ENCODE measurements at regions of chr18 and their contacts with region 1.

Region 1: DNA sequence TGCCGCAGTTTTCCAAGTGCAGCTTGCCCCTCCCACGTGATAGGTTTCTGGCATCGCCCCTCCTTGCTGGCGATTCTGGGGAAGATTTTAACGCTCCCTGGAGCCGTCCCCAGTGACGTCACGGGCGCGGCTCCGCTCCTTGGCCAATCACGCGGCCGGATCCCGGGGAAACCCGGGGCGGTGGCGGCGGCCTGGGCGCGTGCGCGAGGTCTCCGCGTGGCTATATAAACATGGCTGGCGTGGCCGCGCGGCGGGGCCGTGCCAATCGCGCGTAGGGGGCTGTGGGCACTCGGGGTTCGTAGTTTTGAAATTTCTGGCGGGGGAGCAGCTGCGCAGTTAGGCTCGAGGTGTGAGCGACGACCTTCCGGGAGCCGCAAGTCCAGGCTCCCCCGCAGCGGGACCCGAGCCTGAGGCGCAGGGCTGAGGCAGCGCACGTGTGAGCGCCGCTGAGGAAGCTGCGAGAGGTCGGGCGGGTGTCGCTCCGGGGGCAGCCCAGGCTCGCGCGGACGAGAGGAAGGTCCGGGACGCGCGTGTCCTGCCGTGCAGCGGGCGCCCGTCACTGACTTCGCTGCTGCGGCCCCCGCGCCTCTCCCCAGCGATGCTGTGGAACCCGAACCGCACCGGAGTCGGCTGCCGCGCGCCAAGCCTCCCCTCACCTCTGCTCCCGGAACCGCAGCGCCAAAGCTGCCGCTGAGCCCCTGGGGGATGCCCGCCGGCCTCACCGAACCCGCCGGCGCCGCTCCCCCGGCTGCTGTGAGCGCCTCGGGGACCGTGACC is at the start of gene TAF4B:
- DNase-seq: peak; percentile 91
- H3K4me3 Mint-ChIP-seq: peak within 1 kb of the TSS; percentile 92
- H3K27ac Mint-ChIP-seq: peak within 1 kb of the TSS; percentile 77
- H3K4me1 Mint-ChIP-seq: peaks cover 31% of the 10 kb centered on the region
- H3K27me3 Mint-ChIP-seq: peaks cover under 1% of the 10 kb centered on the region
- total RNA-seq, gene TAF4B: 3.3 to 3.8 TPM

Region 2: GRCh38 chr18:26090130-26091046 is 136.0 kb before region 1 on chr18 and contains the start of gene SS18:
- CTCF ChIA-PET with region 1: no interaction called
- POLR2A ChIA-PET with region 1: interaction called, 26 read pairs
- DNase-seq: peak; percentile 92
- H3K4me3 Mint-ChIP-seq: peak within 1 kb of the TSS; percentile 91
- H3K27ac Mint-ChIP-seq: peak within 1 kb of the TSS; percentile 93
- H3K4me1 Mint-ChIP-seq: peaks cover 33% of the 10 kb centered on the region
- H3K27me3 Mint-ChIP-seq: no peaks in the 10 kb centered on the region
- total RNA-seq, gene SS18: 54.1 to 54.8 TPM

Region 3: DNA sequence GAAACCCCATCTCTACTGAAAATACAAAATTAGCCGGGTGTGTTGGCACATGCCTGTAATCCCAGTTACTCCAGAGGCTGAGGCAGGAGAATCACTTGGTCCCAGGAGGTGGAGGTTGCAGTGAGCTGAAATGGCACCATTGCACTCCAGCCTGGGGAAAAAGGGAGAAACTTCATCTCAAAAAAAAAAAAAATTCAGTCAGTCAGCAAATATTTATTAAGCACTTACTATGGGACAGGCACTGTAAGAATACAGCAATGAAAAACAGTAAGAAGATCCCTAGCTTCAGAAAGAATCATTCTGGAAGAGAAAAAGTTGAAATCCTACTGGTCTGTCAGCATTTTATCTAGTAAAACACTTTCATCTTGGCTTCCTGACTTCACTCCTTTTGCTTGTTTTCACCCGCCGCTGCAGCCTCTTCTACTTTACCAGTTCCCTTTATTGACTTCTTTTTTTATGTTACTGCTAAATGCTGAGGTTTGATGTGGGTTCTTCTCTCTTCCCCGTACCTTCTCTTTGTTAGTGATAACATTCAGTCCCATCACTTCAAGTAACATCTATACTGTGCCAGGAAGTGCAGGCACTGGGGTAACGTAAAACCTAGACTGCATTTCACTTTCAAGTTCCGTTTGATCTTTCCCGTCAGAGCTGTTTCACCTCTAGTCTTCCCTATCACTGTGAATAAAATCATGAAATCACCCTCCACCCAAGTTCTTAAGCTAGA is 11.0 kb before region 1 on chr18:
- CTCF ChIA-PET with region 1: no interaction called
- POLR2A ChIA-PET with region 1: interaction called, 26 read pairs
- DNase-seq: peak; percentile 32
- H3K4me3 Mint-ChIP-seq: peak overlapping the region; percentile 71
- H3K27ac Mint-ChIP-seq: peak overlapping the region; percentile 82
- H3K4me1 Mint-ChIP-seq: peaks cover 19% of the 10 kb centered on the region
- H3K27me3 Mint-ChIP-seq: no peaks in the 10 kb centered on the region